ENCODE measurements at regions of chr4 and their contacts with region 1.

Region 1: GRCh38 chr4:40897557-40898203 is 147.9 kb downstream of the NSUN7 start:
- DNase-seq: peak; percentile 70
- H3K4me3 Mint-ChIP-seq: no peak overlapping the region
- H3K27ac Mint-ChIP-seq: no peak overlapping the region
- H3K4me1 Mint-ChIP-seq: no peaks in the 10 kb centered on the region
- H3K27me3 Mint-ChIP-seq: no peaks in the 10 kb centered on the region
- CTCF ChIP-seq: peak; percentile 58

Region 2: GRCh38 chr4:40736910-40737309 is 160.8 kb before region 1 on chr4:
- CTCF ChIA-PET with region 1: interaction called, 8 read pairs
- POLR2A ChIA-PET with region 1: no interaction called
- intact Hi-C with region 1: loop called (anchors 1 kb)
- DNase-seq: peak; percentile 52
- H3K4me3 Mint-ChIP-seq: no peak overlapping the region
- H3K27ac Mint-ChIP-seq: no peak overlapping the region
- H3K4me1 Mint-ChIP-seq: peaks cover 6% of the 10 kb centered on the region
- H3K27me3 Mint-ChIP-seq: no peaks in the 10 kb centered on the region
- CTCF ChIP-seq: peak; percentile 39

Region 3: DNA sequence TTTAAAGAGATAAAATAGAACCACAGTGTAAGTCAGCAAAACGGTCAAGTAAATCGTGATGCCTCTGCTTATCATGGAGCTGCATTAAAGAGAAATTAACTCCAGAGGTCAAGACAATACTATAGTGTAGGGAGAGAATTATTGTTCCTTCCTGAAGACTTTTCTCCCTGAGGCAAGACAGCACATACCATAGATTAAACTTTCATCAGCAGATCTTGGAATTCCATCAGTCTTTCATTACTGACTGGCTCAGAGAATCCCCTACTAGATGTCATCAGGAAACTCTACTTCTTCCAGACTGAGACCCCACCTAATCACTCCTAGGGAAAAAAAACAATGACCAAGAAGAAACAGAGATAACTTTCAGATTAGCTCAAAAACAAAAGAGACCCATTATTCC is 16.6 kb before region 1 on chr4:
- CTCF ChIA-PET with region 1: interaction called, 14 read pairs
- POLR2A ChIA-PET with region 1: no interaction called
- intact Hi-C with region 1: no loop called
- DNase-seq: no peak
- H3K4me3 Mint-ChIP-seq: no peak overlapping the region
- H3K27ac Mint-ChIP-seq: no peak overlapping the region
- H3K4me1 Mint-ChIP-seq: no peaks in the 10 kb centered on the region
- H3K27me3 Mint-ChIP-seq: no peaks in the 10 kb centered on the region
- CTCF ChIP-seq: no peak

Region 4: GRCh38 chr4:40887288-40888131 is 10.2 kb before region 1 on chr4:
- CTCF ChIA-PET with region 1: interaction called, 14 read pairs
- POLR2A ChIA-PET with region 1: no interaction called
- intact Hi-C with region 1: no loop called
- DNase-seq: peak; percentile 10
- H3K4me3 Mint-ChIP-seq: no peak overlapping the region
- H3K27ac Mint-ChIP-seq: no peak overlapping the region
- H3K4me1 Mint-ChIP-seq: no peaks in the 10 kb centered on the region
- H3K27me3 Mint-ChIP-seq: no peaks in the 10 kb centered on the region
- CTCF ChIP-seq: no peak

Region 5: GRCh38 chr4:40908702-40909362 is 11.2 kb after region 1 on chr4:
- CTCF ChIA-PET with region 1: interaction called, 13 read pairs
- POLR2A ChIA-PET with region 1: no interaction called
- intact Hi-C with region 1: no loop called
- DNase-seq: peak; percentile 93
- H3K4me3 Mint-ChIP-seq: peak overlapping the region; percentile 38
- H3K27ac Mint-ChIP-seq: peak overlapping the region; percentile 93
- H3K4me1 Mint-ChIP-seq: peaks cover 23% of the 10 kb centered on the region
- H3K27me3 Mint-ChIP-seq: no peaks in the 10 kb centered on the region
- CTCF ChIP-seq: peak; percentile 92